ENCODE measurements at regions of chr10 and their contacts with region 1.

Region 1: GRCh38 chr10:74293686-74294371 is 142.8 kb downstream of the ADK start:
- DNase-seq: no peak
- CTCF ChIP-seq: no peak

Region 2: GRCh38 chr10:74306227-74306982 is 12.6 kb after region 1 on chr10:
- CTCF ChIA-PET with region 1: interaction called, 15 read pairs
- POLR2A ChIA-PET with region 1: no interaction called
- DNase-seq: no peak
- CTCF ChIP-seq: no peak